ENCODE measurements at regions of chr22 and their contacts with region 1.

Region 1: DNA sequence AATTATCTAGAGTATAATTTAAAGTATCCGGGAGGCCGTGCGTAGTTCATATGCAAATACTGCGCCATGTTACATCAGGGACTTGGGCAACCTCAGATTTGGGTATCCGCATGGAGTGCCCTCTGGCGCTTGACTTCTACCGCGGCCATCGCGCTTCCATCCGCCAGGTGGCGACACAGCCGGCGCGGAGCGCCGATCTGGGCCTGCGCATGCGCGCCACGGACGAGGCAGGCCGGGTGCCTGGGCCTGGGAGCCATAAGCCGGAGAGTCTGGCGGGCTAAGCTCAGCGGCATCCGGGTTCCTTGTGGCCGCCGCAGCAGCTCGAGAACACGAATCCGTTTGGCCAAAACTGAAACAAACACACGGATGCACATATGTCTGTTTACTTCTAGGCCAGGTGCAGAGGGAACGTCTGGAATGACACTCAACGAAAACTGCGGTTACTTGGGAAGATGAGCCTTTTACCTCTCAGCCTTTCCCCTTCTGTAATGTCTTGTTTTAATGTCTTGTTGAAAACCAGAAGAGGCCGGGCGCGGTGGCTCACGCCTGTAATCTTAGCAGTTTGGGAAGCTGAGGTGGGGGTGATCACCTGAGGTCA is 21.9 kb downstream of the SNU13 start:
- DNase-seq: peak; percentile 95
- ATAC-seq: peak; percentile 96
- H3K4me3 ChIP-seq: peak overlapping the region in 4 of 5 experiments; percentile 24 to 64 (median 44)
- H3K4me3 Mint-ChIP-seq: peak overlapping the region; percentile 90
- H3K27ac ChIP-seq: peak overlapping the region; percentile 69 to 71
- H3K27ac Mint-ChIP-seq: peak overlapping the region; percentile 98
- H3K4me1 ChIP-seq: peaks cover 0 to 13% of the 10 kb centered on the region in 2 donors
- H3K4me1 Mint-ChIP-seq: peaks cover 7% of the 10 kb centered on the region
- H3K27me3 ChIP-seq: no peaks in the 10 kb centered on the region
- H3K27me3 Mint-ChIP-seq: no peaks in the 10 kb centered on the region
- CTCF ChIP-seq: peak; percentile 98

Region 2: GRCh38 chr22:41022470-41023298 is 644.1 kb before region 1 on chr22:
- CTCF ChIA-PET with region 1: no interaction called
- POLR2A ChIA-PET with region 1: no interaction called
- intact Hi-C with region 1: loop called (anchors 5 kb)
- DNase-seq: peak; percentile 87
- ATAC-seq: peak; percentile 71
- H3K4me3 ChIP-seq: peak overlapping the region; percentile 11 to 96 (median 70)
- H3K4me3 Mint-ChIP-seq: peak overlapping the region; percentile 88
- H3K27ac ChIP-seq: peak overlapping the region; percentile 83 to 86
- H3K27ac Mint-ChIP-seq: peak overlapping the region; percentile 94
- H3K4me1 ChIP-seq: peaks cover 8 to 14% of the 10 kb centered on the region in 2 donors
- H3K4me1 Mint-ChIP-seq: peaks cover 12% of the 10 kb centered on the region
- H3K27me3 ChIP-seq: no peaks in the 10 kb centered on the region
- H3K27me3 Mint-ChIP-seq: no peaks in the 10 kb centered on the region
- CTCF ChIP-seq: no peak

Region 3: DNA sequence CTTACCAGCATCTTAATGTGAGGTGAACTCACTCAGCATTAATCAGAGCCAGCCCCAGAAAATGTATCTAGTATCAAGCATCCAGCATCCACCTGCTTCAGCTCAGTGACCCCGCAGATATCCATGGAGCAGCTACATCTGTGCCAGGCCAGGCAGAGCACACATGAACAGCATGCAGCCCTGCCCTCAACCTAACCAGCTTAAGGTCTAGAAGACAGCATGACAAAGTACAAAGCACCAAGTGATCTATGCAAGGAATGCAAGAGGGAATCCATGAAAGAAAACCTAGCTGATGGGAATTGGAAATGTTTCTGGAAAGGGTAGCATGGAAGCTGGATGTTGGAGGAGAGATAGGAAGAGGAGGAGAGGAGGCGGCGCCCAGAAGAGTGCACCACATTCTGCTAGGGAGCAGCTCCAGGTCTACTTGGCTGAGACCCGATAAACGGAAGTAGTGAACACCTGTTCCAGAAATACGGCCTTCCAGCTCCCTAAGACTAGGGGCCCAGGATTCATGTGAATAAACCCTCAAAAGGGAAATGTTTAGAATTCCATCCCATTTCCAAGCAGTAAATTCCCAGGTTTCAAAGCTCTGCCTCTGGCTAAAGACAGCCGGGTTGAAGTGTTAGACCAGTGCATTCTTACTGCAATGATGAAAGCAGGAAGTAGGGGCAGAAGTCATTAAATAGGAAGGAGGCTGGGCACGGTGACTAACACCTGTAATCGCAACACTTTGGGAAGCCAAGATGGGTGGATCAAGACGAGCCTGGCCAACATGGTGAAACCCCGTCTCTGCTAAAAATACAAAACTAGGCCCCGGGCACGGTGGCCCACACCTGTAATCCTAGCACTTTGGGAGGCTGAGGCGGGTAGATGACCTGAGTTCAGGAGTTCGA is 485.2 kb before region 1 on chr22:
- CTCF ChIA-PET with region 1: no interaction called
- POLR2A ChIA-PET with region 1: no interaction called
- intact Hi-C with region 1: no loop called
- DNase-seq: no peak
- ATAC-seq: no peak
- H3K4me3 ChIP-seq: no peak overlapping the region
- H3K4me3 Mint-ChIP-seq: no peak overlapping the region
- H3K27ac ChIP-seq: no peak overlapping the region
- H3K27ac Mint-ChIP-seq: peak overlapping the region; percentile 13
- H3K4me1 ChIP-seq: no peaks in the 10 kb centered on the region
- H3K4me1 Mint-ChIP-seq: peaks cover 14% of the 10 kb centered on the region
- H3K27me3 ChIP-seq: no peaks in the 10 kb centered on the region
- H3K27me3 Mint-ChIP-seq: no peaks in the 10 kb centered on the region
- CTCF ChIP-seq: no peak

Region 4: DNA sequence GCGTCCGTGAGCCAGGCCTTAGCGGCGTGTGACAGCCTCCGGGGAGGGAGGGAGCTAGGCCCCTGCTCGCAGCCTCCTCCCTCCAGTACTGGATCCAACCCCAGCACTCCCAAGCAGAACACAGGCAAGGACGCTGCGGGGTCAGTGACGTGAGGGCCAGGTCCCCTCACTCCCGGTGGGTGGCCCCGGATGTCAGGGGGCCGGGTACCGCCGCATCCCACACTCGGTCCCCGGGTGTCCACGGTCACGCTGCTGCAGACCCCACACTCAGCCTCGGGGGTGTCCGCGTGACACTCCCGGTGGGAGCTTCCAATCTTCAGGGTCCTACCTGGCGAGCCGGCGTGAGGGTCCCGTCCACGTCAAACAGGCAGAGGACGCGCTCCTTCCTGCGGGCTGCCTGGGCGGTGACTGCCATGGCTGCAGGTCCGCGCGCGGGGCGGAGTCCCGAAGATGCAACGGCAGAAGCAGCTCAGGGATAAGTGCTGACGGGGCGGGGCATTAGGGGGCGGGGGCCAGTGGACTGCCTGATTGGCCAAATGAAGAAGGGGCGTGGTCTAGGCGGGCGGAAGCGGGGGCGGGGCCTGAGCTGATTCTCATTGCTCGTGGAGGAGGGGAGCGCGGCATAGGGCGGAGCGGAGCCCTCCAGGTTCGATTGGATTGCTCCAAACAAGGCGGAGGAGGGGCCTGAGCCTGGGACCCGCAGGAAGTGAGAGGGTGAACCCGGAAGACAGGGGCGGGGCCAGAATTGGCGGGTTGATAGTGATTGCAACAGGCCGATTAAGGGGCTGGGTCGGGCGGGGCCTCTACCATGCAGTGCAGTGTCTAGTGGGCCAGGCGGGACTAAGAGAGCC is 77.1 kb before region 1 on chr22 and contains the start of gene PMM1:
- CTCF ChIA-PET with region 1: no interaction called
- POLR2A ChIA-PET with region 1: interaction called, 3 read pairs
- intact Hi-C with region 1: loop called (anchors 1 kb)
- DNase-seq: peak; percentile 100
- ATAC-seq: peak; percentile 97
- H3K4me3 ChIP-seq: peak within 1 kb of the TSS; percentile 19 to 81 (median 73)
- H3K4me3 Mint-ChIP-seq: peak within 1 kb of the TSS; percentile 96
- H3K27ac ChIP-seq: peak within 1 kb of the TSS in 1 of 2 donors; percentile 24
- H3K27ac Mint-ChIP-seq: peak within 1 kb of the TSS; percentile 87
- H3K4me1 ChIP-seq: peaks cover 6 to 18% of the 10 kb centered on the region in 2 donors
- H3K4me1 Mint-ChIP-seq: peaks cover 13% of the 10 kb centered on the region
- H3K27me3 ChIP-seq: no peaks in the 10 kb centered on the region
- H3K27me3 Mint-ChIP-seq: no peaks in the 10 kb centered on the region
- CTCF ChIP-seq: no peak
- total RNA-seq, gene PMM1: 22.1 and 23.3 TPM in 2 replicates

Region 5: GRCh38 chr22:41621099-41621910 is 45.5 kb before region 1 on chr22 and contains the start of gene XRCC6:
- CTCF ChIA-PET with region 1: interaction called, 3 read pairs
- POLR2A ChIA-PET with region 1: interaction called, 5 read pairs
- intact Hi-C with region 1: loop called (anchors 2 kb)
- DNase-seq: peak; percentile 100
- ATAC-seq: peak; percentile 96
- H3K4me3 ChIP-seq: peak within 1 kb of the TSS; percentile 68 to 97 (median 89)
- H3K4me3 Mint-ChIP-seq: peak within 1 kb of the TSS; percentile 96
- H3K27ac ChIP-seq: peak within 1 kb of the TSS; percentile 95 to 96
- H3K27ac Mint-ChIP-seq: peak within 1 kb of the TSS; percentile 94
- H3K4me1 ChIP-seq: peaks cover 19 to 27% of the 10 kb centered on the region in 2 donors
- H3K4me1 Mint-ChIP-seq: peaks cover 39% of the 10 kb centered on the region
- H3K27me3 ChIP-seq: no peaks in the 10 kb centered on the region
- H3K27me3 Mint-ChIP-seq: no peaks in the 10 kb centered on the region
- CTCF ChIP-seq: no peak
- total RNA-seq, gene XRCC6: 176 and 180 TPM in 2 replicates

Region 6: GRCh38 chr22:41636467-41636866 is 30.3 kb before region 1 on chr22:
- CTCF ChIA-PET with region 1: no interaction called
- POLR2A ChIA-PET with region 1: no interaction called
- intact Hi-C with region 1: no loop called
- DNase-seq: no peak
- ATAC-seq: no peak
- H3K4me3 ChIP-seq: no peak overlapping the region
- H3K4me3 Mint-ChIP-seq: no peak overlapping the region
- H3K27ac ChIP-seq: no peak overlapping the region
- H3K27ac Mint-ChIP-seq: no peak overlapping the region
- H3K4me1 ChIP-seq: no peaks in the 10 kb centered on the region
- H3K4me1 Mint-ChIP-seq: no peaks in the 10 kb centered on the region
- H3K27me3 ChIP-seq: no peaks in the 10 kb centered on the region
- H3K27me3 Mint-ChIP-seq: no peaks in the 10 kb centered on the region
- CTCF ChIP-seq: no peak

Region 7: GRCh38 chr22:41688365-41689211 is 21.8 kb after region 1 on chr22 and contains the start of gene SNU13:
- CTCF ChIA-PET with region 1: interaction called, 9 read pairs
- POLR2A ChIA-PET with region 1: interaction called, 5 read pairs
- intact Hi-C with region 1: loop called (anchors 1 kb)
- DNase-seq: peak; percentile 96
- ATAC-seq: peak; percentile 91
- H3K4me3 ChIP-seq: peak within 1 kb of the TSS; percentile 74 to 99 (median 96)
- H3K4me3 Mint-ChIP-seq: peak within 1 kb of the TSS; percentile 91
- H3K27ac ChIP-seq: peak within 1 kb of the TSS; percentile 92 to 96
- H3K27ac Mint-ChIP-seq: peak within 1 kb of the TSS; percentile 97
- H3K4me1 ChIP-seq: peaks cover 10 to 23% of the 10 kb centered on the region in 2 donors
- H3K4me1 Mint-ChIP-seq: peaks cover 31% of the 10 kb centered on the region
- H3K27me3 ChIP-seq: no peaks in the 10 kb centered on the region
- H3K27me3 Mint-ChIP-seq: no peaks in the 10 kb centered on the region
- CTCF ChIP-seq: no peak
- total RNA-seq, gene SNU13: 108 and 114 TPM in 2 replicates

Region 8: DNA sequence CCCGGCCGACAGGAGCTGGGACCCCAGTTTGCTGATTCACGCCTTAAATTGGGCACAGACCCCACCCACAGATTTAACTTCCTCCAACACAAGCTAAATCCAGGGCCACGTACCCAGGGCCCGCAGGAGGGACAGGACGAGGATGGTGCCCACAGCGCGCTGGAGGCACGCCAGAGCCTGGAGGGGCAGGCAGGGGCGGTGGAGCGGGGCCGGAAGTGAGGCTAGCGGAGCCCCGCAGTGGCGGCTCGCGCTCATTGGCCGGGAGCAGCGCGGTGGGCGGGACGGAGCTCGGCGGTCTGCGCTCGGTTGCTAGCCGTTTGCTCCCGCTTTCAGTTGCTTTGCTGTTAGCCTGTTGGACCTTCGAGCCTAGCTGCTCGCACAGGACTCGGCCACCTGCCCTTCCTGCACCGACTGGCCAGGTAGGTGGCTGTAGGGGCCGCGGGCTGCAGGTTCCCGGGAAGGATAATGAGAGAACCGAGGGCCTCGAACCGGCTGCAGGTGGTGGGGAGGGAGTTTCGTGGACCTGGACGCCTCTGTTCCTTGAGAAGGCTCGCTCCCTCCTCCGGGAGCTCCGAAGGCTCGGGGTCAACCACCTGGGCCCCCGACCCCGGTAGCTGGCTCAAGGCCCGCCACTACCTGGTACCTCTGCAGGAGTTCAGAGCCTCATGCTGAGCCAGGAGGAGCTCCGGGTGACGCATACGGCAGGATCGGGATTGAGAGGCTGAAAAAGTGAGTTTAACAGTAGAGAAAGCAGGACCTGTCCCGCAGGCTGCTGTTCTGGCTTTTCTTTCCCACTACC is 133.8 kb after region 1 on chr22 and contains the start of gene CCDC134:
- CTCF ChIA-PET with region 1: interaction called, 3 read pairs
- POLR2A ChIA-PET with region 1: interaction called, 5 read pairs
- intact Hi-C with region 1: loop called (anchors 1 kb)
- DNase-seq: peak; percentile 91
- ATAC-seq: peak; percentile 98
- H3K4me3 ChIP-seq: peak within 1 kb of the TSS; percentile 65 to 98 (median 96)
- H3K4me3 Mint-ChIP-seq: peak within 1 kb of the TSS; percentile 98
- H3K27ac ChIP-seq: peak within 1 kb of the TSS; percentile 90 to 91
- H3K27ac Mint-ChIP-seq: peak within 1 kb of the TSS; percentile 99
- H3K4me1 ChIP-seq: peaks cover 19 to 22% of the 10 kb centered on the region in 2 donors
- H3K4me1 Mint-ChIP-seq: peaks cover 24% of the 10 kb centered on the region
- H3K27me3 ChIP-seq: no peaks in the 10 kb centered on the region
- H3K27me3 Mint-ChIP-seq: no peaks in the 10 kb centered on the region
- CTCF ChIP-seq: no peak
- total RNA-seq, gene CCDC134: 17.4 and 18.1 TPM in 2 replicates

Region 9: DNA sequence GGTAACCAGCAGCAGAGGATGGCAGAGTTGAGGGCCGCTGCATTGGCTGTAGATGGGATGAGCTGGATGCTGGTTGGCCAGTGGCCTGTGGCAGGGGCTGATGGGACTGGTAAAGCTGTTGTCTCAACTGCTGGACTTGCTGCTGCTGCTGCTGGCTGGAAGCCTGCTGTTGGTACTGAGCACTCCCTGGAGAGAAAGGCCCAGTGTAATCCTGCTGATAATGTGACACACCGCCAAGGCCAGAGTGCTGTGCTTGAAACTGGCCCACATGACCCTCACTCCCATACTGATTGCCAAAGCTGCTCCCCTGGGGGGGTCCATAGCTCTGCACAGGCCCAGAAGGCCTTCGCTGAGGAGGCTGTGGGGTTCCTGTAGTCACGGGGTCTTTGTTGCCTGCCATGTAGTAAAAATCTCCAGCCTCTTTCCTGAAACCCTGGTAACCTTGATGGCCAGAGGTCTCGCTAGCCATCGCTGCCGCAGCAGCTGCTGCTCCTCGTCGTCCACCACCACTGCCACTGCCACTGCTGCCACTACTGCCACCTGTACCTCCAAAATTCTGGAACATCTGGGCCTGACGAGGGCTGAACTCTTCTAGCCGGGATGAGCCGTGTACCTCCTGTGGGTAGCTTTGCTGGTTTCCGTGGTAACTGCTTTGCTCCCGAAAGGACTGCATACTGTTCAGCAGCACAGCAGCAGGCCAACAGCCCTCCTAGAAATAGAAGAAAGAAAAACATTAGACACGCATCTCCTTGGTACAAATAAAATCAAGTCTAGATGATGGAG is 548.1 kb after region 1 on chr22:
- CTCF ChIA-PET with region 1: no interaction called
- POLR2A ChIA-PET with region 1: no interaction called
- intact Hi-C with region 1: no loop called
- DNase-seq: no peak
- ATAC-seq: no peak
- H3K4me3 ChIP-seq: no peak overlapping the region
- H3K4me3 Mint-ChIP-seq: no peak overlapping the region
- H3K27ac ChIP-seq: no peak overlapping the region
- H3K27ac Mint-ChIP-seq: no peak overlapping the region
- H3K4me1 ChIP-seq: peaks cover 3 to 11% of the 10 kb centered on the region in 2 donors
- H3K4me1 Mint-ChIP-seq: peaks cover 29% of the 10 kb centered on the region
- H3K27me3 ChIP-seq: no peaks in the 10 kb centered on the region
- H3K27me3 Mint-ChIP-seq: no peaks in the 10 kb centered on the region
- CTCF ChIP-seq: no peak

Measured in B cell (primary cell).